PC-3 (cell line): ENCODE measurements at regions of chr7 and their contacts with region 1.

Region 1: DNA sequence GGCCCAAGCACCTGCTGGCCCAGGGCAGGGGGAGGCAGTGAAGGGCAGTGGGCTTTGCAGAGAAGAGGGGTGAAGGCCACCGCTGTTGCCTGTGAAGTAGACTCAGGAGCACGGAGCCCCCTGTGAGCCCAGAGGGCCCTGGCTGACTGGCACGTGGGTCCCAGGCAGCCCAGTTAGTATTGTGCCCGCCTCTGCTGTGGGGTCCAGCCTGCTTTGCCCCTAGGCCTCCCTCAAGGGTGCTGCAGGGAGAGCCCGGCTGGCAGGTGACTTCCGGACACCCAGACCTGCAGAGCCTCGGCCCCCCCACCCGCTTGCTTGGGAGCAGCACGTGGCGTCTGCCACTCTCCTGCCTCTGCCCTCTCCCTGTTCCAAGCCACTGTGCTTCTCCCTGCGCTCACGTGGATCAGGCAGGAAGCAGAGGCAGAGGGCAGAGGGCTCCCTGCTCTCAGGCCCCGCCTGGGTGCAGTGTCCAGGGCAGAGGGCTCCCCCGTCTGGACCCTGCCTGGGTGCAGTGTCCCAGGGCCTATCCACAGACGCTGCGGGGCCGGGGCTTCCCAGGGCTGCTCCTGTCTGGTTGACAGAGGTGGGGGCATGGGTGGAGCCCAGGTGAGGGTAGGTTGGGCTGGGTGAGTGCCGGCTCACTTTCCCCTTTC is 88.4 kb downstream of the DNAJB6 start:
- DNase-seq: no peak
- ATAC-seq: peak; percentile 30; the same call in 1 of the 2 replicates
- H3K4me3 ChIP-seq: no peak overlapping the region
- H3K27ac ChIP-seq: no peak overlapping the region
- H3K4me1 ChIP-seq: no peaks in the 10 kb centered on the region
- H3K27me3 ChIP-seq: no peaks in the 10 kb centered on the region
- CTCF ChIP-seq: no peak

Region 2: DNA sequence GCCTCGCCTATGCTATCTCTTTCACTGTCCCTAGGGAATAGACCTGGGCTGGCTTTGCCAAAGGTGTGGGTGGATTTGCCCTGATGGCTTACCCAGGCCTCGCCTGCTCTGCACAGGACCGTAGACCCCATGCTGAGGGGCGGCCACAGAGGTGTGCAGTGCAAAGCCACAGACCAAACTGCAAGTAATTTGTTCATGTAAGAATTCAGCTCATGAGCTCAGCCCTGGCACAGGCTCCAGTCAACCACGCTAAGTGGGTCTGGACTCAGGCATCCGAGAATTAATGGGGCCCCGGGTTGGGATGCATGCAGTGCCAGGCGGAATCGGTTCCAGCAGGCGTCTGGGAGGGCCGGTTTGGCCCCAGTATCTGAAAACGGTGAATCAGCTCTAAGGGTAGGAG is 356.8 kb after region 1 on chr7:
- CTCF ChIA-PET with region 1: interaction called, 3 read pairs
- POLR2A ChIA-PET with region 1: interaction called, 10 read pairs
- intact Hi-C with region 1: no loop called
- DNase-seq: no peak
- ATAC-seq: no peak
- H3K4me3 ChIP-seq: no peak overlapping the region
- H3K27ac ChIP-seq: no peak overlapping the region
- H3K4me1 ChIP-seq: peaks cover 7% of the 10 kb centered on the region; the same call in 1 of the 2 replicates
- H3K27me3 ChIP-seq: no peaks in the 10 kb centered on the region; the same call in 1 of the 2 replicates
- CTCF ChIP-seq: no peak